GM12878 (cell line): ENCODE measurements at regions of chr17 and their contacts with region 1.

Region 1: GRCh38 chr17:73166731-73167581 is 2.1 kb downstream of the SSTR2 start:
- DNase-seq: no peak
- ATAC-seq: peak; percentile 71
- H3K4me3 ChIP-seq: peak overlapping the region; percentile 82
- H3K27ac ChIP-seq: peak overlapping the region; percentile 51
- H3K4me1 ChIP-seq: peaks cover 34% of the 10 kb centered on the region
- H3K27me3 ChIP-seq: 0 out of 4 replicates have a peak, but pooled peaks cover 0 to 3% of the 10 kb centered on the region in 2 experiments
- CTCF ChIP-seq: no peak
- EP300 ChIP-seq: peak in 1 of 2 experiments; percentile 30; a peak in 1 of 4 replicates
- POLR2A ChIP-seq: no peak
- RAD21 ChIP-seq: no peak

Region 2: DNA sequence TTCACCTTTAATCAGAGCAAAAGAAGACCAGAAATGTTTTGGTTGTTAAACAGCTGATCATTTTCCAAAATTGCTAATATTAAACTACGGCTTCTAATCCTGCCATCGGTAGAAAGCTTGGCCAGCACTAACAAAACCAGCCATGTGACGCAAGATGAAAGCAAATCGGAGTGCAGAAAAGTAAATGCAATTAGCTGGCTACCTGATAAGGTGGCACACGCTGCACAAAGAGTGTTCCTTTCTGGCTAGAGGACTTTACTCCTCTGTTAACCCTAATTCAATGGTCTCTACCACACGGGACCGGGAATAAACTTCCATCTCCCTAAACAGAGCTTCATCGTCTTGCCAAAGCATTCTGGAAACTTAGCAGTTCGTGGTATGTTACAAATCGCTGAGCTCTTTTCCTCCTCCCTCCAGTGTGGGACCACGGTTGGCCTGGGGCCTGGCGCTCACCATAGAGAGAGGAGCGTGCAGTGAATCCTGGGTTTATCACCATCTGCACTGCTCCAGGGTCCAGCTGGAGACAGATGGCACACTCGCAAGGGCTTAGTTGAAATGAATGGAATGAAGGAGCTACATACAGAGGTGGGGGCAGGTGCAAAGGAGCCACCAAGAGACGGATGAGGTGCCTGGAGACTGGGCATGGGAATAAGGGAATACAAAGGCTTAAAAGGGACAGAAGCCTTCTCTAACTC is 15.8 kb after region 1 on chr17:
- CTCF ChIA-PET with region 1: interaction called, 5 read pairs
- POLR2A ChIA-PET with region 1: no interaction called
- RAD21 ChIA-PET with region 1: interaction called, 3 read pairs
- SMC1A ChIA-PET with region 1: interaction called, 11 read pairs
- in situ Hi-C with region 1: no loop called
- intact Hi-C with region 1: no loop called
- DNase-seq: no peak
- ATAC-seq: no peak
- H3K4me3 ChIP-seq: no peak overlapping the region
- H3K27ac ChIP-seq: no peak overlapping the region
- H3K4me1 ChIP-seq: no peaks in the 10 kb centered on the region
- H3K27me3 ChIP-seq: no peaks in the 10 kb centered on the region
- CTCF ChIP-seq: no peak
- EP300 ChIP-seq: no peak
- POLR2A ChIP-seq: no peak
- RAD21 ChIP-seq: no peak